ENCODE measurements at regions of chr1 and their contacts with region 1.

Region 1: DNA sequence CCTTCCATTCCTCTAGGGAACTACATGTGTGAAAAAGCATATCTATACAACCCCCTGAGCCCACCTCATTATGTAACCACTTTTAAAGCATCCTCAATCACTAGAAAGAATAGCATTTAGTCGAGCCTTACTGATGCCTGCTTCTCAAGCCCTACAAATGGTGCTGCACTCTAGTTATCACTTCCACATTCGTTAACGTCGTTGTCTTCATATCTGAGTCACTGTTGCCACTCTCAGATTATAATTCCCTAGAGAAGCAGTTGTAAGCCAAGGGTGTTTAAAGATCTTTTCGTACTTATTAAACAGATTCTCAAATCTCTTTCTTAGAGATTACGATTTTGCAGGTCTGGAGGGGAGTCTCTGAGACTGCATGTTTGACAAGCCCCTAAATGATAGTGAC is 16.5 kb downstream of the ATP1B1 start:
- DNase-seq: no peak
- ATAC-seq: no peak
- H3K4me3 ChIP-seq: no peak overlapping the region
- H3K27ac ChIP-seq: no peak overlapping the region
- H3K4me1 ChIP-seq: no peaks in the 10 kb centered on the region
- H3K27me3 ChIP-seq: no peaks in the 10 kb centered on the region

Region 2: DNA sequence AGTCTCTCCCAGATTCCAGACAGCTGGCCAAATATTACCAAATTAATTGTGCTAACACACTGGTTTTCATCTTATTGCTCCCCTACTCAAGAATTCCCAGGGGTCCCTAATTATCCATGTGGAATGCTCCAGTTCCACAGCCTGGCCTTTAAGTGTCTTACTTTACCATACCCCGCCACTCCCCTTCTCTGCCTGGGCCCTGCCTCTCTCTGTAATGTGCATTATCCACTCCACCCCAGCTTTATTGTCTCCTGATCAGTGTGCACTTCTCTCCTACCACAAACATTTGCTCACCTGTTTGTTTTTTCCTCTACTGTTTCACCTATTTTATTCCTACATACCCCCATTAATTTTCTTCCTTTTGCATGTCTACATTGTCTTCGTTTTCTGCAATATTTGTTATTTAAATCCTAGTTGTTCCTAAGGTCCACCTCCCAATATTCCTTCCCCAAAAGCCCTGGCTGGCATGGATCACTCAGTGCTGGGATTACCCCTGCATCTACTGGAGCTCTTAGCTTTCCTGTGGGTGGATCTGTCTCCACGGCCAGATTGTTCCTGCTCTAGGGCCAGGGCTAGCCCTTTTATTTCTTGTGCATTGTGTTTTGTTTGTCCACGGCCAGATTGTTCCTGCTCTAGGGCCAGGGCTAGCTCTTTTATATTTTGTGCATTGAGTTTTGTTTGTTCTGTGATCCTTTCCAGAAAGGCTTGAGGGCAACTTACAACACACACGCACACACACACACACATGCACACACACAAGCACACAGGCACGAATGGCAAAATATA is 49.8 kb before region 1 on chr1:
- intact Hi-C with region 1: loop called in 1 of 2 experiments (anchors 10 kb)
- DNase-seq: no peak
- ATAC-seq: no peak
- H3K4me3 ChIP-seq: no peak overlapping the region
- H3K27ac ChIP-seq: no peak overlapping the region
- H3K4me1 ChIP-seq: no peaks in the 10 kb centered on the region
- H3K27me3 ChIP-seq: no peaks in the 10 kb centered on the region

Measured in aorta (tissue), 5 donors.